ENCODE measurements at regions of chr10 and their contacts with region 1.

Region 1: DNA sequence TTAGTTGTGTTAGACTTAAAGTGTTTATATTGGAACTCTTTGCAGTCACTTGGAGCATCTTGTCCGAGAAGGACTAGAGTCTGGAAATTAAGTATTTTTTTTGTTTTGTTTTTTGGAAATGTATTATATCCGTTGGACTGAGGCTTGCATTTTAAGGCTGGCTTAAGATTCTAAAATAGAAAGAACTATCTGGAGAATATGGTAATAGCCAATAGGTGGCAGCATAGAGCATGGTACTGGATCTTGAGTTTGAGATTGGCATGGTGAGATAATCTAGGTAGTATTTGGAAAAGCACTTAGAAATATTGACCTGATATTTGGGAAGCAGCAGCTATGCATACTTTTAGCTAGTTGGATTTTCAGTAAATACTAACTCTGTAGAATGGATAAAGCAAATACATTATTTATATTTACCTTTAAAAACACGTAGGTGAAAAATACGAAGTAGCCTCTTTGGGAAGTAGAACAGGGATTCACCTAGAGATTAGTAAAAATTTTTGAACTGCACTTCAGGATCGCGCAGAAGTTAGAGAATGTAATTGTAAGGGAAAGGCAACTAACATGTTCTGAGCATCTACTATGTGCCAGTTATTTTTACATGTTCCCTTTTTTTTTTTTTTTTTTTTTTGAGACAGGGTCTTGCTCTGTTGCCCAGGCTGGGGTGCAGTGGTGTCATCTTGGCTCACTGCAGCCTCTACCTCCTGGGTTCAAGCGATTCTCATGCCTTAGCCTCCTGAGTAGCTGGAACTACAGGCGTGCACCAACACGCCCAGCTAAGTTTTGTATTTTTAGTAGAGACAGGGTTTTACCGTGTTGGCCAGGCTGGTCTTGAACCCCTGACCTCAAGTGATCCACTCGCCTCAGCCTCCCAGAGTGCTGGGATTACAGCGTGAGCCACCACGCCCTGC is 78.6 kb downstream of the LCOR start:
- DNase-seq: peak; percentile 59

Region 2: DNA sequence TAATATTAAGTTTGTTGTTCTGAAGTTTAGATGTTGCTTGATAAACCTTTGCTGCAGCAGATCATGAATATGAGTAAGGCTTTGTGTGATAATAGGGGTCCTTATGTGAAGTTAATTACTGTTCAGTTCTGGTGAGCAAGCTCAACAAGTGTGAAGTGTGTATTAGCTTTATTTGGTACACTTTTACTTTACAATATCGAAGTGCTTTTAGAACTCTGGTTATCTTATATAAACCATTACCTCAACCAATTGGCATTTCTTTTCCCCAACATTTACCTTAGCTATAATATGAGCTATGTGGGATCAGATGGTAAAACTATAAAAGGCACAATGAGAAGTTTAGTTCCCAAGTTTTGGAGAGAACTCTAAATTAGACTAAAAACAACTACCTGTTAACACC is 49.0 kb after region 1 on chr10:
- CTCF ChIA-PET with region 1: interaction called, 14 read pairs
- POLR2A ChIA-PET with region 1: no interaction called
- DNase-seq: no peak

Region 3: GRCh38 chr10:97025613-97026242 is 115.0 kb after region 1 on chr10:
- CTCF ChIA-PET with region 1: interaction called, 15 read pairs
- POLR2A ChIA-PET with region 1: no interaction called
- DNase-seq: peak; percentile 78